PC-3 (cell line): ENCODE measurements at regions of chr2 and their contacts with region 1.

Region 1: DNA sequence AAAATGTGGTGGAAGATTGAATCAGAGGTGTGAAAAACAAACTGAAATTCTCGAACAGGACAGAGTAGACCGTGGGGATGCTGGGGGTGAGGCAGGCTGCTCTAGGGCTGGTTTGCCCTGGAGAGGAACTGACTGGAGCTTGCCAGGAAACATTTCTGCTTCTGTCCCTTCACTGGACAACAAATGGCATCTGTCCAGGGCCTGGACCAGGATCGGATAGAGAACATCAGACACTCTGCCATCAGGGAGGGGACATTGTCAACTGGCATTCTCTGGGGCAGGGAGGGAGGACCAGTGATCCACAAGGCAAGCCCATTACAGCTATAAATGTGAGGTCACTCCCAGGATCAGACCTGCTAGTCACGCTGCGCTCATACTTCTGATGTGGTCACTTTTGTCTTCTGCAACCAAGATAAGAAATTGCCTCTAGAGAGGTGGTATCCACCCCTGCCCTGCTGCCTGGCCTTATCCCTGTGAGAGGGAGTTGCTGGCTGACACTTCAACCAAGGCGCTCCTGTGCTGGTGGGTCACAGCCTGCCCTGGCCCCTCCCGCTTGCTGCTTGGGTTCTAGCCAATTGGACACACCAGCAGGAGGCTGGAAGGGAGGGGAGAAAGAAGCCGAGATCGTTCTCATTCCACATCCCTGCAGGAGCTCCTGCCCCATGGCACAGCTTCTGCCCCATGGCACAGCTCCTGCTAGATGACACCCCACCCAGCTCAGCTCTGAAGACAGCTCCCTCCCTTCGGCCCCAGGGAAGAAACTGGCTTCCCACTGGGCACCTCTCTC is 8.7 kb downstream of the NPPC start:
- DNase-seq: no peak
- ATAC-seq: peak; percentile 35; the same call in 1 of the 2 replicates
- H3K4me3 ChIP-seq: no peak overlapping the region
- H3K27ac ChIP-seq: no peak overlapping the region
- H3K4me1 ChIP-seq: no peaks in the 10 kb centered on the region
- H3K27me3 ChIP-seq: no peaks in the 10 kb centered on the region
- CTCF ChIP-seq: no peak

Region 2: DNA sequence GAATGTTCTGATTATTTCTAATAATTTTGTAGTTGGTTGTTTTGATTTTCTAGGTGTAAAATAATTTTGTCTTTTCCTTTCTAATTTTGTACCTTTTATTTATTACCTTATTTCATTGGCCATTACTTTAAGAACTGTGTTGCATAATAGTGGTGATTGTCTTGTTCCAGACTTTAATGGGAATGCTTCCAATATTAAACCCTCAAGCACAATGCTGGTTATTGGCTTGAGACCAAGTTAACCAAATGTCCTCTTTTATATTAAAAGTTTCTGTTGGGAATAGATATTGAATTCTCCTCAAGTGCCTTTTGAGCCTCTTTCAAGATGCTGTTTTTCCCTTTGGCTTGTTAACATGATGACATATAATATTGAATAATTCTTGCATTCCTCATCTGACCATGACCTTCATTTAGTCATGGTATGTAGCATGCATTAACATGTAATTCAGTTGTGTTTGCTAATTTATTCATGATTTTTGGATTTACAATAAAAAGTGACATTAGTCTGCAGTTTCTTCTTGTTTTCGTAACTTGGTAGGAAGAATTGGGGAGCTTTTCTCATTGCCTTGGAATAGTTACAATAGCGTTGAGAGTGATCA is 185.8 kb after region 1 on chr2:
- CTCF ChIA-PET with region 1: interaction called, 11 read pairs
- POLR2A ChIA-PET with region 1: no interaction called
- intact Hi-C with region 1: no loop called
- DNase-seq: no peak
- ATAC-seq: no peak
- H3K4me3 ChIP-seq: no peak overlapping the region
- H3K27ac ChIP-seq: no peak overlapping the region
- H3K4me1 ChIP-seq: no peaks in the 10 kb centered on the region
- H3K27me3 ChIP-seq: no peaks in the 10 kb centered on the region
- CTCF ChIP-seq: no peak